K562 (cell line): ENCODE measurements at regions of chr1 and their contacts with region 1.

Region 1: GRCh38 chr1:32291708-32292492 is at the start of gene HDAC1:
- DNase-seq: peak; percentile 99 to 100 (median 100)
- ATAC-seq: peak; percentile 98
- H3K4me3 ChIP-seq: peak within 1 kb of the TSS; percentile 96
- H3K27ac ChIP-seq: peak within 1 kb of the TSS; percentile 96
- H3K4me1 ChIP-seq: peaks cover 14 to 25% of the 10 kb centered on the region in 2 experiments; a peak in 4 of 5 replicates
- H3K27me3 ChIP-seq: no peaks in the 10 kb centered on the region
- CTCF ChIP-seq: no peak
- EP300 ChIP-seq: no peak
- POLR2A ChIP-seq: peak; percentile 89
- RAD21 ChIP-seq: no peak
- polyA plus RNA-seq, gene HDAC1: 183 to 205 TPM

Region 2: DNA sequence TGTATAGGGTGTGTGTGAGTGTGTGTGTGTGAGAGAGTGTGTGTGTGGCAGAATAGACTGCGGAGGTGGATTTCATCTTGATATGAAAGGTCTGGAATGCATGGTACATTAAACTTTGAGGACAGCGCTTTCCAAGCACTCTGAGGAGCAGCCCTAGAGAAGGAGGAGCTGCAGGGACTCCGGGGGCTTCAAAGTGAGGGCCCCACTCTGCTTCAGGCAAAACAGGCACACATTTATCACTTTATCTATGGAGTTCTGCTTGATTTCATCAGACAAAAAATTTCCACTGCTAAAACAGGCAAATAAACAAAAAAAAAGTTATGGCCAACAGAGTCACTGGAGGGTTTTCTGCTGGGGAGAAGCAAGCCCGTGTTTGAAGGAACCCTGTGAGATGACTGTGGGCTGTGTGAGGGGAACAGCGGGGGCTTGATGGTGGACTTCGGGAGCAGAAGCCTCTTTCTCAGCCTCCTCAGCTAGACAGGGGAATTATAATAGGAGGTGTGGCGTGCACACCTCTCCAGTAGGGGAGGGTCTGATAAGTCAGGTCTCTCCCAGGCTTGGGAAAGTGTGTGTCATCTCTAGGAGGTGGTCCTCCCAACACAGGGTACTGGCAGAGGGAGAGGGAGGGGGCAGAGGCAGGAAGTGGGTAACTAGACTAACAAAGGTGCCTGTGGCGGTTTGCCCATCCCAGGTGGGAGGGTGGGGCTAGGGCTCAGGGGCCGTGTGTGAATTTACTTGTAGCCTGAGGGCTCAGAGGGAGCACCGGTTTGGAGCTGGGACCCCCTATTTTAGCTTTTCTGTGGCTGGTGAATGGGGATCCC is 18.3 kb before region 1 on chr1:
- CTCF ChIA-PET with region 1: no interaction called
- POLR2A ChIA-PET with region 1: interaction called, 35 read pairs
- in situ Hi-C with region 1: no loop called
- intact Hi-C with region 1: no loop called
- DNase-seq: peak in 3 of 4 experiments; percentile 38 to 70 (median 69)
- ATAC-seq: peak; percentile 69
- H3K4me3 ChIP-seq: no peak overlapping the region
- H3K27ac ChIP-seq: no peak overlapping the region
- H3K4me1 ChIP-seq: peaks cover 8 to 34% of the 10 kb centered on the region in 2 experiments; a peak in 4 of 5 replicates
- H3K27me3 ChIP-seq: peaks cover 0 to 13% of the 10 kb centered on the region in 2 experiments; a peak in 2 of 5 replicates
- CTCF ChIP-seq: no peak
- EP300 ChIP-seq: no peak
- POLR2A ChIP-seq: no peak
- RAD21 ChIP-seq: no peak

Region 3: GRCh38 chr1:32307323-32307722 is 15.4 kb after region 1 on chr1:
- CTCF ChIA-PET with region 1: no interaction called
- POLR2A ChIA-PET with region 1: interaction called, 50 read pairs
- in situ Hi-C with region 1: no loop called
- intact Hi-C with region 1: no loop called
- DNase-seq: peak; percentile 40 to 63 (median 46)
- ATAC-seq: peak; percentile 25; the same call in 2 of the 3 replicates
- H3K4me3 ChIP-seq: no peak overlapping the region
- H3K27ac ChIP-seq: peak overlapping the region; percentile 26; the same call in 2 of the 3 replicates
- H3K4me1 ChIP-seq: peaks cover 35 to 47% of the 10 kb centered on the region in 2 experiments
- H3K27me3 ChIP-seq: no peaks in the 10 kb centered on the region
- CTCF ChIP-seq: no peak
- EP300 ChIP-seq: peak; percentile 81
- POLR2A ChIP-seq: no peak
- RAD21 ChIP-seq: no peak